CD8-positive, alpha-beta T cell (primary cell): ENCODE measurements at regions of chr19 and their contacts with region 1.

Region 1: DNA sequence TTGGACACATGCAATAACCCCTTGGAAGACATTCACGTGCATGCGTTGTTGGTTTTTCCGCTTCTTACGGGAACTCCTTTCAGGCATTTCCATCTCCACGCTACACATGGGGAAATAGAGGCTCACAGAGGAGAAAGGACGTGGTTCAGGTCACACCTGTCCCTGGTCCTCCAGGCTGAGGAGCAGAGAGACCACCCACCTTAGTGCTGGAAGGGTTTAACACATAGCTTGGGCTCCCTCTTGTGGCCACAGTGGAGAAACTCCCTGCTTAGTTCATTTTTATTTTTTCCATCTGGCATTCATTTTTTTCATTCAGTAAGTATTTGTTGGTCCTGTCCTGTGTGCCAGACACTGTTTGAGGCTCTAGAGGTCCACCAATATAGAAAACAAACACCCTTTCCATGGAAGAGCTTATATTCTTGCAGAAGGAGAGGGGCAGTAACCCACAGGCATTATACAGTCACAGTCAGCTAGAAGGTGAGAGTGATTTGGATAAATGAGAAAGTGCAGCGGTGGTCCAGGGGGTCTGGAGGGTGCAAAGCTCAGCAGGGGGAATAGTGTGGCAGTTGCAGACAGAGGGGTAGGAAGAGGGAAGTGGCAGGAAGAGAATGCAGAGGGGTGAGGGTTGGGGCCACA is 24.2 kb upstream of the TTYH1 start:
- DNase-seq: peak; percentile 38 to 88 (median 74)
- ATAC-seq: peak; percentile 45
- H3K4me3 ChIP-seq: no peak overlapping the region
- H3K4me3 Mint-ChIP-seq: peak overlapping the region; percentile 48
- H3K27ac ChIP-seq: no peak overlapping the region
- H3K27ac Mint-ChIP-seq: peak overlapping the region; percentile 33
- H3K4me1 ChIP-seq: peaks cover 32% of the 10 kb centered on the region
- H3K4me1 Mint-ChIP-seq: peaks cover 34% of the 10 kb centered on the region
- H3K27me3 ChIP-seq: no peaks in the 10 kb centered on the region
- H3K27me3 Mint-ChIP-seq: peaks cover 12% of the 10 kb centered on the region
- CTCF ChIP-seq: peak; percentile 94

Region 2: DNA sequence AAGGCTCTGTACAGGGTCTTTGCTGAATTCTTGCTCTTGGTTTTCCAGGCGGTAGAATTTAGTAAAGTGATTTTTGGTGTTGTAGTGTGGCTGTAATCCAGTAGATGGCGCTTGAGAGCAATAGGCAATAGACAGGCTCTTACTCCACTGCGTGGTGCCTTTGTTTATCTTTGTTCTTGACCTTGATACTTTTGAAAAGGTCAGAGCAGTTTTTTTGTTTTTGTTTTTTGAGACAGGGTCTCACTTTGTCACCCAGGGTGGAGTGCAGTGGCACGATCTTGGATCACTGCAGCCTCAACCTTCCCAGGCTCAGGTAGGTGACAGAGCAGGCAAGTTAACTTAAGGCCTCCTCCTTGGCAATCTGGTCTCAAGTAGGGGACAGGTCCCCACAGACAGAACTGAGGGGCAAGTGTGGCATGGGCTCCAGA is 65.9 kb before region 1 on chr19:
- CTCF ChIA-PET with region 1: interaction called, 328 read pairs
- POLR2A ChIA-PET with region 1: interaction called, 5 read pairs
- intact Hi-C with region 1: loop called in 1 of 2 experiments (anchors 1 kb)
- DNase-seq: peak; percentile 10 to 76 (median 53)
- ATAC-seq: peak; percentile 83
- H3K4me3 ChIP-seq: no peak overlapping the region
- H3K4me3 Mint-ChIP-seq: no peak overlapping the region
- H3K27ac ChIP-seq: no peak overlapping the region
- H3K27ac Mint-ChIP-seq: no peak overlapping the region
- H3K4me1 ChIP-seq: peaks cover 8% of the 10 kb centered on the region
- H3K4me1 Mint-ChIP-seq: peaks cover 15% of the 10 kb centered on the region
- H3K27me3 ChIP-seq: no peaks in the 10 kb centered on the region
- H3K27me3 Mint-ChIP-seq: peaks cover 6% of the 10 kb centered on the region
- CTCF ChIP-seq: peak; percentile 94

Region 3: GRCh38 chr19:54352546-54352945 is 38.5 kb before region 1 on chr19:
- CTCF ChIA-PET with region 1: interaction called, 83 read pairs
- POLR2A ChIA-PET with region 1: interaction called, 5 read pairs
- intact Hi-C with region 1: no loop called
- DNase-seq: no peak
- ATAC-seq: no peak
- H3K4me3 ChIP-seq: no peak overlapping the region
- H3K4me3 Mint-ChIP-seq: no peak overlapping the region
- H3K27ac ChIP-seq: no peak overlapping the region
- H3K27ac Mint-ChIP-seq: peak overlapping the region; percentile 78
- H3K4me1 ChIP-seq: no peaks in the 10 kb centered on the region
- H3K4me1 Mint-ChIP-seq: peaks cover 19% of the 10 kb centered on the region
- H3K27me3 ChIP-seq: no peaks in the 10 kb centered on the region
- H3K27me3 Mint-ChIP-seq: no peaks in the 10 kb centered on the region
- CTCF ChIP-seq: no peak

Region 4: GRCh38 chr19:54373781-54374631 is 17.1 kb before region 1 on chr19:
- CTCF ChIA-PET with region 1: interaction called, 17 read pairs
- POLR2A ChIA-PET with region 1: interaction called, 25 read pairs
- intact Hi-C with region 1: loop called in 1 of 2 experiments (anchors 1 kb)
- DNase-seq: peak in 1 of 9 experiments; percentile 37
- ATAC-seq: no peak
- H3K4me3 ChIP-seq: no peak overlapping the region
- H3K4me3 Mint-ChIP-seq: no peak overlapping the region
- H3K27ac ChIP-seq: no peak overlapping the region
- H3K27ac Mint-ChIP-seq: no peak overlapping the region
- H3K4me1 ChIP-seq: peaks cover 82% of the 10 kb centered on the region
- H3K4me1 Mint-ChIP-seq: peaks cover 77% of the 10 kb centered on the region
- H3K27me3 ChIP-seq: no peaks in the 10 kb centered on the region
- H3K27me3 Mint-ChIP-seq: no peaks in the 10 kb centered on the region
- CTCF ChIP-seq: no peak

Region 5: DNA sequence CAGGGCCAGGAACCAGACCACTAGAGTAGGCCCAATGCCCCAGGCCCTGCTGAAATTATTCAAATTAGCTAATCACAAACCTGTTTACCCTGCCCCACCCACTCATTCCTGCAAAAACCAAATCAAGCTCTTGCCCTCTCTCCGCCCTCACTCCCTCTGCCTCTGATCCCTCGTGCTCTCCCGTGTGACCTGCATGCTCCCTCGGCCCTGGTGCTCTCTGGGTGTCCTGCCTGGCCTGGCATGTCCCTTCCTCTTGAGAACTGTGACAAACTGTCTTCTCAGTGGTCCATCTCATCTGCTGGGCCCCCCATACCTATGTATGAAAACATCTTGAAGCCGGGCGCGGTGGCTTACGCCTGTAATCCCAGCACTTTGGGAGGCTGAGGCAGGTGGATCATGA is 12.0 kb after region 1 on chr19:
- CTCF ChIA-PET with region 1: interaction called, 17 read pairs
- POLR2A ChIA-PET with region 1: no interaction called
- intact Hi-C with region 1: no loop called
- DNase-seq: no peak
- ATAC-seq: no peak
- H3K4me3 ChIP-seq: no peak overlapping the region
- H3K4me3 Mint-ChIP-seq: no peak overlapping the region
- H3K27ac ChIP-seq: no peak overlapping the region
- H3K27ac Mint-ChIP-seq: no peak overlapping the region
- H3K4me1 ChIP-seq: no peaks in the 10 kb centered on the region
- H3K4me1 Mint-ChIP-seq: no peaks in the 10 kb centered on the region
- H3K27me3 ChIP-seq: no peaks in the 10 kb centered on the region
- H3K27me3 Mint-ChIP-seq: peaks cover 3% of the 10 kb centered on the region
- CTCF ChIP-seq: no peak

Region 6: GRCh38 chr19:54427586-54427985 is 36.5 kb after region 1 on chr19:
- CTCF ChIA-PET with region 1: no interaction called
- POLR2A ChIA-PET with region 1: no interaction called
- intact Hi-C with region 1: no loop called
- DNase-seq: no peak
- ATAC-seq: no peak
- H3K4me3 ChIP-seq: no peak overlapping the region
- H3K4me3 Mint-ChIP-seq: no peak overlapping the region
- H3K27ac ChIP-seq: no peak overlapping the region
- H3K27ac Mint-ChIP-seq: no peak overlapping the region
- H3K4me1 ChIP-seq: peaks cover 14% of the 10 kb centered on the region
- H3K4me1 Mint-ChIP-seq: peaks cover 2% of the 10 kb centered on the region
- H3K27me3 ChIP-seq: peaks cover 0 to 9% of the 10 kb centered on the region in 2 experiments
- H3K27me3 Mint-ChIP-seq: peaks cover 38% of the 10 kb centered on the region
- CTCF ChIP-seq: no peak

Region 7: DNA sequence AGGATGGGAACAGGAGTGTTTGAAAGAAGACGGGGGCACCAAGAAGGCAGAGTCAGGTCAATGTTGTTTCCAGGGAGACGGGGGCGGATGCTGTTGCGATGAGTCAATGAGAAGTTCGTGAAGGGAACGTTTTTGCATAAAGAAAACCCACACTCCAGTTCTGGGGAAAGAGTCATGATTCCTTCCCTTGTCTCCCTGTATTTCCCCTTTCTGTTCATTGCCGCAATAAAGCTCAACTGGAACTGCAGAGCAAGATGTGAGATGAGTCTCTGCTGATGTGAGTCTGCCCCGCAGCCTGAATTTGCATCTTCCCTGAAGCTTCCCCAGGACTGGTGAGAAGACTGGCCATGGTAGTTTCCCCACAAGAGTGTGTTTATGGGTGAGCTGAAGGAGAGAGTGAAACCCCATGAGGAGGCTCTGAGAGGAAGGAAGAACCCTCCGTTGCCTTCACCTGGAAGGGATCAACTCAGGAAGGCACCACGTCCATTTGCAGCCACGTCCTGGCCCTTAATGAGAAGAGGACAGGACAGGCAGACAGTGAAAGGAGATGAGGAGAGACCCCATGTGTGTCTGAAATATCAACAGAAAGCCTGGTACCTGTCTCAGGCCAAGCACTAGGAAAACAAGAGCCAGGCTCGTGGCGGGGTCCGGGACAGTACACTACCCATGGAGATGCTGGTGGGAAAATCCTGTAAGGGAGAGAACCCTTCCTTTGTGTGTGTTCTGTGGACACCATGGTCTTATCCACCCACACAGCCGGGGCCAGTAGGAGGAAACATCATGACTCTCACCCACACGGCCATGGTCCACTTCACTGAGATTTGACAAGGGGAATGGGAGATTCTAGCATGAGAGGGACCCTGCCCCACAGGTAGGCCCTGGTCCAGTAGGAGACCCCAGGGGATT is 216.1 kb after region 1 on chr19:
- CTCF ChIA-PET with region 1: no interaction called
- POLR2A ChIA-PET with region 1: no interaction called
- intact Hi-C with region 1: no loop called
- DNase-seq: no peak
- ATAC-seq: no peak
- H3K4me3 ChIP-seq: no peak overlapping the region
- H3K4me3 Mint-ChIP-seq: no peak overlapping the region
- H3K27ac ChIP-seq: no peak overlapping the region
- H3K27ac Mint-ChIP-seq: no peak overlapping the region
- H3K4me1 ChIP-seq: no peaks in the 10 kb centered on the region
- H3K4me1 Mint-ChIP-seq: no peaks in the 10 kb centered on the region
- H3K27me3 ChIP-seq: peaks cover 0 to 2% of the 10 kb centered on the region in 2 experiments
- H3K27me3 Mint-ChIP-seq: peaks cover 25% of the 10 kb centered on the region
- CTCF ChIP-seq: no peak

Region 8: GRCh38 chr19:54674021-54674617 is 283.1 kb after region 1 on chr19:
- CTCF ChIA-PET with region 1: no interaction called
- POLR2A ChIA-PET with region 1: no interaction called
- intact Hi-C with region 1: no loop called
- DNase-seq: peak in 2 of 9 experiments; percentile 43 to 50
- ATAC-seq: no peak
- H3K4me3 ChIP-seq: no peak overlapping the region
- H3K4me3 Mint-ChIP-seq: no peak overlapping the region
- H3K27ac ChIP-seq: no peak overlapping the region
- H3K27ac Mint-ChIP-seq: no peak overlapping the region
- H3K4me1 ChIP-seq: no peaks in the 10 kb centered on the region
- H3K4me1 Mint-ChIP-seq: no peaks in the 10 kb centered on the region
- H3K27me3 ChIP-seq: peaks cover 2 to 7% of the 10 kb centered on the region in 2 experiments
- H3K27me3 Mint-ChIP-seq: peaks cover 12% of the 10 kb centered on the region
- CTCF ChIP-seq: peak; percentile 33